Transverse colon (tissue), 4 donors: ENCODE measurements at regions of chr6 and their contacts with region 1.

Region 1: GRCh38 chr6:48113130-48113529 is 2.1 kb upstream of the PTCHD4 start:
- DNase-seq: no peak
- H3K4me3 ChIP-seq: no peak overlapping the region
- H3K27ac ChIP-seq: no peak overlapping the region
- H3K4me1 ChIP-seq: no peaks in the 10 kb centered on the region
- H3K27me3 ChIP-seq: no peaks in the 10 kb centered on the region
- CTCF ChIP-seq: no peak
- EP300 ChIP-seq: no peak
- POLR2A ChIP-seq: no peak

Region 2: DNA sequence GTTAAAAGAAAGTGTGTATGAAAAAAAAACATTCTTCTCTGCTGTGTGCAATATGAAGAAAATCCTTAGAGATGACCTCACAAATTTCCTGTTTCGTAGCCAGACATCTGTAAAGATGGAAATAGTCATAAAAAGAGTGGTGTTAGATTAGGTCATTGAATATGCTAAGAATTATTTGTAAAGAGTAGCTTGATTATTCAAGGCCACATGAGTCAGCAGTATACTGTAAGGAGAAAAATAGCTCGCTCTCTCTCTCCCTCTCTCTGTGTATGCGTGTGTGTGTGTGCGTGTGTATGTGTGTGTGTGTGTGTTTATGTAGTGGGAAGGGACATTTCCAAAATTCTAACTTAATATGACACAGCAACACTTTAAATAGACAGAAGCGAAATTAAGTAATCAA is 81.0 kb before region 1 on chr6:
- in situ Hi-C with region 1: no loop called
- intact Hi-C with region 1: no loop called
- DNase-seq: no peak
- H3K4me3 ChIP-seq: no peak overlapping the region
- H3K27ac ChIP-seq: no peak overlapping the region
- H3K4me1 ChIP-seq: no peaks in the 10 kb centered on the region
- H3K27me3 ChIP-seq: no peaks in the 10 kb centered on the region
- CTCF ChIP-seq: no peak
- EP300 ChIP-seq: no peak
- POLR2A ChIP-seq: no peak

Region 3: GRCh38 chr6:48134246-48134645 is 21.1 kb after region 1 on chr6:
- in situ Hi-C with region 1: no loop called
- intact Hi-C with region 1: loop called (anchors 1 kb)
- DNase-seq: no peak
- H3K4me3 ChIP-seq: no peak overlapping the region
- H3K27ac ChIP-seq: no peak overlapping the region
- H3K4me1 ChIP-seq: no peaks in the 10 kb centered on the region
- H3K27me3 ChIP-seq: no peaks in the 10 kb centered on the region
- CTCF ChIP-seq: no peak
- EP300 ChIP-seq: no peak
- POLR2A ChIP-seq: no peak